ENCODE measurements at regions of chr5 and their contacts with region 1.

Region 1: DNA sequence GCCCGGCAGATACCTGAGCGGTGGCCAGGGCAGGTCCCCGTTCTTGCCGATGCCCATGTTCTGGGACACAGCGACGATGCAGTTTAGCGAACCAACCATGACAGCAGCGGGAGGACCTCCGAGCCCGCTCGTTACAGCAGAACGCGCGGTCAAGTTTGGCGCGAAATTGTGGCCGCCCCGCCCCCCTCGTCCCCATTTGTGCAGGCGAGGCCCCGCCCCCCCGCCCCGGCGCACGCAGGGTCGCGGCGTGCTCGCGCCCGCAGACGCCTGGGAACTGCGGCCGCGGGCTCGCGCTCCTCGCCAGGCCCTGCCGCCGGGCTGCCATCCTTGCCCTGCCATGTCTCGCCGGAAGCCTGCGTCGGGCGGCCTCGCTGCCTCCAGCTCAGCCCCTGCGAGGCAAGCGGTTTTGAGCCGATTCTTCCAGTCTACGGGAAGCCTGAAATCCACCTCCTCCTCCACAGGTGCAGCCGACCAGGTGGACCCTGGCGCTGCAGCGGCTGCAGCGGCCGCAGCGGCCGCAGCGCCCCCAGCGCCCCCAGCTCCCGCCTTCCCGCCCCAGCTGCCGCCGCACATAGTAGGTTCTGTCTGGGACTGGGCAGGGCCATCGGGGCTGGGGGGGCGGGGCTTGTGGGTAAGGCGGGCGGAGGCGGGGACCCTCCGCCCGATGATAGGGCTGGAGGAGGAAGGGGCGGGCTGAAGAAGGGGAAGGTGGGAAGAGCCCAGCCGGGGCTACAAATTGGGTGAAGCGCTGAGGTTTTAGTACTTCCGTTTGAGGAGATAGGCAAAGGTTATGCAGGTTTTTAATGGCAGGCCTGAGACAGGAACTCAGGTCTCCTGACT is at the starts of genes DHFR and MSH3:
- DNase-seq: peak; percentile 81
- ATAC-seq: peak; percentile 76
- H3K4me3 ChIP-seq: peak within 1 kb of the TSS; percentile 96
- H3K27ac ChIP-seq: peak within 1 kb of the TSS; percentile 93
- H3K4me1 ChIP-seq: no peaks in the 10 kb centered on the region; the same call in 1 of the 2 replicates
- H3K27me3 ChIP-seq: no peaks in the 10 kb centered on the region
- CTCF ChIP-seq: peak; percentile 12 to 17 (median 14); a peak in 2 of 6 replicates
- EP300 ChIP-seq: no peak
- POLR2A ChIP-seq: peak; percentile 84
- RAD21 ChIP-seq: no peak
- polyA plus RNA-seq, gene DHFR: 57.9 to 59.3 TPM
- polyA plus RNA-seq, gene MSH3: 4.7 to 5.4 TPM

Region 2: DNA sequence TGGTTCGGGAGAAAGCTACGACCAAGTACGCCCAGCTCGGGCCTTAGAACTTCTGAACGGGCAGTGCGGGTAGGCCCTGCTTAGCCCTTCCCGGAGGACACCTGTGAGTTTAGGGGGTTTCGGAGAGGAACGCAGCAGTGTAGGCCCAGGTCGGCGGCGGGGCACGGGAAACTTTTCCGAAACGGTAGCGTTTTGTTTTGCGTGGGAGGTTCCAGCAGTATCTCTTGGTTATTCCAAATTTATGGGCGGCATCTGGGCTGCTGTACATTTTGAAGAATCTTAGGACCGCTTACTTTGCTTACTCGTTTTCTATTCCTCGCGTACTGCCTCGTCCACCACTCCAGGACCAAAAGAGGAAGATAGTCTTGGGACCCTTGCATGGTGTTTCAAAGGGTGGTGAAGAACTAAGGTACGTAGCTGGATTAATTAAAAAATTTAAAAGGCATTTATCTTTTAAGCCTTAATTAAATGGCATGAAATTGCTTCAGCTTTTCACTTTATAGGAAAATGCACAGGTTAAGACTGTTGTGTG is 1041.9 kb before region 1 on chr5:
- CTCF ChIA-PET with region 1: no interaction called
- POLR2A ChIA-PET with region 1: no interaction called
- RAD21 ChIA-PET with region 1: no interaction called
- SMC1A ChIA-PET with region 1: no interaction called
- in situ Hi-C with region 1: no loop called
- intact Hi-C with region 1: loop called (anchors 10 kb)
- DNase-seq: no peak
- ATAC-seq: peak; percentile 49
- H3K4me3 ChIP-seq: peak overlapping the region; percentile 99
- H3K27ac ChIP-seq: peak overlapping the region; percentile 87
- H3K4me1 ChIP-seq: no peaks in the 10 kb centered on the region
- H3K27me3 ChIP-seq: no peaks in the 10 kb centered on the region
- CTCF ChIP-seq: no peak
- EP300 ChIP-seq: no peak
- POLR2A ChIP-seq: no peak
- RAD21 ChIP-seq: no peak

Region 3: DNA sequence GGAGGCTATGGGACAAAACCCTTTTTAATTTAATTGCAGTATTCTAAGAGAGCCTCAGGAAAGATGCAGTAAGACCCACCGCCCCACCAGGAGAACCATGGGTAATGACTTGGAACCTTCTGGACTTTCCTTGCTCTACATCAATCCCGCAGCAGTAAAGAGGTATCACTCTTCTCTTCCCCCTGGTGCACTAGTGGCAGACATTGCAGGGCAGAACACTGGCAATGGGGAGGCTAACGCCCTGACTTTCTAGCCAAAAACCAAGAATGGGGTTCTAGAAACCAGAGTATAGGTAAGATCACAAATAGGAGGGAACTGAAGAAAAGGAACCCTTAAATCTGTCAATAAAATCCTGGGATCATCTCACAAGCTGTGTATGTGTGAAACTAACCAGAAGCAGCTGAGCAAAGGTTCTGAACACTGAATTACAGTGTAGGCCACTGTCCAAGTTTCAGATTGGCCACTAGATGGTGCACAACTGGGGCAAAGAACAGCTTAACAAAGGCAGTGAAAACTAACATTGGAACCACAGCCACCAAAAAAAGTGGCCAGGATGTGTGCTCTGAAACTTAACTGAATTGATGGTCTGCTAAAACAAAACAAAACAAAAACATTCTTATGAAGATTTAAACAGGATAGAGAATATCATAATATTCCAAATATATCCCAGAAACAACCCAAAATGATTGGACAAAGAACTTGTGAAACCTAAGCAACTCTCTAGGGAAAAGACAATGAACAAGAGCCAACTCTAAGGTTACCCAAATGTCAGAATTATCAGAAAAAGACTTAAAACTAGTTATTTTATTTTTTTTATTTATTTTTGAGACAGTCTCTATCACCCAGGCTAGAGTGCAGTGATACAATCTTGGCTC is 173.4 kb before region 1 on chr5:
- CTCF ChIA-PET with region 1: interaction called, 15 read pairs
- POLR2A ChIA-PET with region 1: interaction called, 3 read pairs
- RAD21 ChIA-PET with region 1: interaction called, 7 read pairs
- SMC1A ChIA-PET with region 1: interaction called, 12 read pairs
- in situ Hi-C with region 1: no loop called
- intact Hi-C with region 1: loop called (anchors 5 kb)
- DNase-seq: peak; percentile 27
- ATAC-seq: peak; percentile 100
- H3K4me3 ChIP-seq: no peak overlapping the region
- H3K27ac ChIP-seq: no peak overlapping the region
- H3K4me1 ChIP-seq: no peaks in the 10 kb centered on the region
- H3K27me3 ChIP-seq: no peaks in the 10 kb centered on the region
- CTCF ChIP-seq: peak; percentile 69 to 86 (median 85)
- EP300 ChIP-seq: no peak
- POLR2A ChIP-seq: no peak
- RAD21 ChIP-seq: peak; percentile 61

Region 4: DNA sequence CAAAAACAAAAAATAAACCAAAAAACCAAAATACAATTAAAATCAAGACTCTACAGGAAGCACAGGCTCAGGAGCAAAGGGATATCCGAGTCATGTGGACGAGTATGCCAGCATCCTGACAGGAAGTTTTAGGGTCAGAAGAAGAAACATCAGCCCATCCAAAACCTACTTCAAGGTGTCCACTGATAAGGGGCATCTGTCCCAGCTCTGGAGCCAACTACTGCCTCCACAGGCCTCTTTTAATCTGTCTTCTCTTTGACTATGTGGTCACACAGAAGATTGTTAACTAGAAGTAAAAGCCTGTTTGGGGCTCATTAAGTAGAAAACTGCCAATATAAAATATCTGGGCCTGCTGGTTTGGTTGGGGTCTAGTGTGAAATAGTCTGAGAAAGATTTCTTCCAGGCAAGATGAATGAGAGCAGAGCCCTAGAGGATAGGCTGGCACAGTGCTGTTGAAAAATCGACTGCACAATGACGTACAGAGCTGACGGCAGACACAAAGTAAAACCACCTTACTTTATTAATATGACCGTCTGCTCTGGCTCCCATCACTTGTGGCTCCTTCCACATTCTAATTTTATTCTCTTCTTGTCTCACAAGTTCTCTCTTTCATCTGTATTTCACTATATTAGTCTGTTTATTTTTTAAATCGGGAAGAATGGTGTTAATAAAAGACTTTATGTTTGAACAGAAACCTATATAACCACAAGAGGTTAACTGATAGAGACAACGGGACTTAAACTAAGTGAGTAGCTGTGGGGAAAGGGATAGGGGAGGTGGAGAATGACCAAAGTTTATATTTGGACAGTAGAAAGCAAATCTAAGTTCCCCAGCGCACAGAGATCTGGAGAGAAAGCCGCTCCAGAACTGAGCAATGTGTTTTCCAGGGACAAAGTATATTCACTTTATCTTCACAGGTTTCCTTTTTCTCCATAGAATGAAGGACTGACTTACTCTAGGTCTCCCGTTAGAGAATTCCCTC is 23.0 kb before region 1 on chr5:
- CTCF ChIA-PET with region 1: no interaction called
- POLR2A ChIA-PET with region 1: no interaction called
- RAD21 ChIA-PET with region 1: no interaction called
- SMC1A ChIA-PET with region 1: no interaction called
- in situ Hi-C with region 1: no loop called
- intact Hi-C with region 1: no loop called
- DNase-seq: no peak
- ATAC-seq: no peak
- H3K4me3 ChIP-seq: no peak overlapping the region
- H3K27ac ChIP-seq: no peak overlapping the region
- H3K4me1 ChIP-seq: no peaks in the 10 kb centered on the region
- H3K27me3 ChIP-seq: no peaks in the 10 kb centered on the region
- CTCF ChIP-seq: no peak
- EP300 ChIP-seq: no peak
- POLR2A ChIP-seq: no peak
- RAD21 ChIP-seq: no peak

Region 5: DNA sequence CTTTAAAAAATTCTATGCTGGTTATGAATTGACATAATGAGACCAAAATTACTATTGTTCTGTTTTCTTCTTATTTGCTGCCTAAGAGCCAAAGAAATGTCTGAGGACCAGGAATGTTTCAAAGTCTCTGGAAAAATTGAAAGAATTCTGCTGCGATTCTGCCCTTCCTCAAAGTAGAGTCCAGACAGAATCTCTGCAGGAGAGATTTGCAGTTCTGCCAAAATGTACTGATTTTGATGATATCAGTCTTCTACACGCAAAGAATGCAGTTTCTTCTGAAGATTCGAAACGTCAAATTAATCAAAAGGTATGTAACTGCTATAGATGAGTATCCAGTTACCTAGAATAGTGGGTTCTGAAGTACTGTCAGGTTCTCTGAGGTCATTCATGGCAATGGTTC is 10.4 kb after region 1 on chr5:
- CTCF ChIA-PET with region 1: interaction called, 30 read pairs
- POLR2A ChIA-PET with region 1: interaction called, 25 read pairs
- RAD21 ChIA-PET with region 1: interaction called, 8 read pairs
- SMC1A ChIA-PET with region 1: interaction called, 37 read pairs
- in situ Hi-C with region 1: no loop called
- intact Hi-C with region 1: no loop called
- DNase-seq: no peak
- ATAC-seq: no peak
- H3K4me3 ChIP-seq: no peak overlapping the region
- H3K27ac ChIP-seq: no peak overlapping the region
- H3K4me1 ChIP-seq: no peaks in the 10 kb centered on the region; the same call in 1 of the 2 replicates
- H3K27me3 ChIP-seq: no peaks in the 10 kb centered on the region
- CTCF ChIP-seq: no peak
- EP300 ChIP-seq: no peak
- POLR2A ChIP-seq: no peak
- RAD21 ChIP-seq: no peak

Region 6: DNA sequence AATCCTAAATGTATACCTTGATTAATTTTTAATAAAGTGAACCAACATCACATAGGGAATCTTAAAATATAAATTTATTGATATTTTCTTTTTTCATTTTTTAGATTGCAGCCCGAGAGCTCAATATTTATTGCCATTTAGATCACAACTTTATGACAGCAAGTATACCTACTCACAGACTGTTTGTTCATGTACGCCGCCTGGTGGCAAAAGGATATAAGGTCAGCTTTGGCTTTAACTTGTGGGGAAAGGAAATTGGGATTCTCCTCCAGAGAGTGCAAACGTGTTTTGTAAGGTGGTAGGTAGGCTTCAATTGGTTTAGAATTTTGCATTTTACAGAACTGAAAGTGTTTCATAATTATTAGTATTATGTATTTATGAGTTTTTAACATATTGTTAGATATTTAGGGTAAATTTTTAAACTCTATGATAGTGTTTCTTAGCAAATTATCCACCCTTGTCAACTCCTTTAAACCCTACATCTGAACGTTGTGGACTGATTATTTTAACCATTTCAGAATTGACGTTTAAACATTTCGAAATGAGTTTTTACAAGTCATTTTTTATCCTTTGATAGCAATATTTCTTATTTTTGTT is 17.6 kb after region 1 on chr5:
- CTCF ChIA-PET with region 1: interaction called, 30 read pairs
- POLR2A ChIA-PET with region 1: interaction called, 25 read pairs
- RAD21 ChIA-PET with region 1: interaction called, 8 read pairs
- SMC1A ChIA-PET with region 1: interaction called, 37 read pairs
- in situ Hi-C with region 1: no loop called
- intact Hi-C with region 1: no loop called
- DNase-seq: peak; percentile 28
- ATAC-seq: peak; percentile 64
- H3K4me3 ChIP-seq: no peak overlapping the region
- H3K27ac ChIP-seq: no peak overlapping the region
- H3K4me1 ChIP-seq: no peaks in the 10 kb centered on the region; the same call in 1 of the 2 replicates
- H3K27me3 ChIP-seq: no peaks in the 10 kb centered on the region
- CTCF ChIP-seq: peak; percentile 78 to 88 (median 85)
- EP300 ChIP-seq: no peak
- POLR2A ChIP-seq: no peak
- RAD21 ChIP-seq: peak; percentile 87

Measured in GM12878 (cell line).